IMR-90 (cell line): ENCODE measurements at regions of chr5 and their contacts with region 1.

Region 1: DNA sequence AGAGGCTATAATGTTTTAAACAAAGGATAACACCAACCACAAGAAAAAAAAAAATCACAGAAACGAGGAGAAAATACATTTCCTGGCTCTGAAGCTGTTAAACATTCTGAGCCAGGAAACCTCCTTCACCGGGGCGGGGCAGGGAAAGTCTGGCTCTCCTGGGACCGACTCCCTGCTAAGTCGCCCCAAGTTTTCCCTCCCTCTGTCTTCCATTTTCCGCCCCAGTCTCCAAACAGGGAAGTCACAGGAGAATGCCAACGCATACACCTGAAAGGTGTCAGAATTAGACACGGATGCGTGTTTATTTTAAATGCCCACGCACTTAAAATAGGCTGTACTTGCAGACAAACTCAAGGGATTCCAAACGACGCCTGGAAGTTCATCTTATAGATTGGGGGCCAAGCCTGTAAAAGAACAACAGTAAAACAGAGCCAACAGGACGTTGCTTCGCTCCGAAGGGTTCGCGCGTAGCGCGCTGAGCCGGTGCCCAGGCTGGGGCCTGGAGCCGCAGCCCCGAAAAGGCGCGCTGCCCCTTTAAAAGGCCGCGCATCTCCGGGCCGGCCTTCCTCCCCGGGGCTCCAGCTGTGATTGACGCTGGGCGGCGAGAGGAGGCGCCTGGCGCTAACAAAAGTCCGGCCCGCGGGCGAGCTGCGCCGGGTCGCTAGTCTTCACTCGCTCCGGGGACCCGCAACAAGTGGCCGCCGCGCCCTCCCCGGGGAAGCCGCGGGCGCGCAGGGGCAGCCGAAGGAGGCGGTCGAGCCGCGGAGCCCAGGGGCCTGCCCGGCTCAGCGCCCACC is at the start of gene FBXL7:
- DNase-seq: peak; percentile 75
- ATAC-seq: peak; percentile 85
- H3K4me3 ChIP-seq: peak within 1 kb of the TSS; percentile 97
- H3K27ac ChIP-seq: peak within 1 kb of the TSS; percentile 40
- H3K4me1 ChIP-seq: peaks cover 2% of the 10 kb centered on the region; the same call in 1 of the 2 replicates
- H3K27me3 ChIP-seq: peaks cover 7% of the 10 kb centered on the region
- CTCF ChIP-seq: peak; percentile 39
- POLR2A ChIP-seq: peak; percentile 73
- RAD21 ChIP-seq: peak; percentile 47
- total RNA-seq, gene FBXL7: 4.1 and 4.4 TPM in 2 replicates

Region 2: GRCh38 chr5:14706615-14707021 is 793.1 kb before region 1 on chr5:
- CTCF ChIA-PET with region 1: no interaction called
- POLR2A ChIA-PET with region 1: no interaction called
- dilution Hi-C with region 1: no loop called
- in situ Hi-C with region 1: loop called (anchors 25 kb)
- intact Hi-C with region 1: no loop called
- DNase-seq: peak; percentile 79
- ATAC-seq: peak; percentile 86
- H3K4me3 ChIP-seq: no peak overlapping the region
- H3K27ac ChIP-seq: peak overlapping the region; percentile 28
- H3K4me1 ChIP-seq: peaks cover 7% of the 10 kb centered on the region
- H3K27me3 ChIP-seq: no peaks in the 10 kb centered on the region
- CTCF ChIP-seq: no peak
- POLR2A ChIP-seq: no peak
- RAD21 ChIP-seq: no peak

Region 3: DNA sequence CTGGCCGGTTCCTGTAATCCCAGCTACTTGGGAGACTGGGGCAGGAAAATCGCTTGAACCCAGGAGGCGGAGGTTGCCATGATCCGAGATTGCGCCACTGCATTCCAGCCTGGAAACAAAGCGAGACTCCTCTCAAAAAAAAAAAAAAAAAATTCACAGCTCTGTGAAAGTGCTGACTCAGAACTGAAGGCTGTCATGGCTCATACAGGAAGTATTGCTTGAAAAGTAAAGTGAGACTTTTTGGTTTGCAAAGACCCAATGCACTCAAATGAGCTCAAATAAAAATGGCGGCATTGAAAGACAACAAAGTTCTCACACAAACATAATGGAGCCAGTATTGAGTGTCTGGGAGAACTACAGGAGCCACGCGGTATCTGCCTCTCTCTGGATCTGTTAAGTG is 202.4 kb after region 1 on chr5:
- CTCF ChIA-PET with region 1: no interaction called
- POLR2A ChIA-PET with region 1: no interaction called
- dilution Hi-C with region 1: no loop called
- in situ Hi-C with region 1: no loop called
- intact Hi-C with region 1: loop called (anchors 5 kb)
- DNase-seq: peak; percentile 54
- ATAC-seq: no peak; the same call in 1 of the 2 replicates
- H3K4me3 ChIP-seq: no peak overlapping the region
- H3K27ac ChIP-seq: no peak overlapping the region
- H3K4me1 ChIP-seq: peaks cover 4% of the 10 kb centered on the region; the same call in 1 of the 2 replicates
- H3K27me3 ChIP-seq: no peaks in the 10 kb centered on the region
- CTCF ChIP-seq: no peak
- POLR2A ChIP-seq: no peak
- RAD21 ChIP-seq: no peak

Region 4: DNA sequence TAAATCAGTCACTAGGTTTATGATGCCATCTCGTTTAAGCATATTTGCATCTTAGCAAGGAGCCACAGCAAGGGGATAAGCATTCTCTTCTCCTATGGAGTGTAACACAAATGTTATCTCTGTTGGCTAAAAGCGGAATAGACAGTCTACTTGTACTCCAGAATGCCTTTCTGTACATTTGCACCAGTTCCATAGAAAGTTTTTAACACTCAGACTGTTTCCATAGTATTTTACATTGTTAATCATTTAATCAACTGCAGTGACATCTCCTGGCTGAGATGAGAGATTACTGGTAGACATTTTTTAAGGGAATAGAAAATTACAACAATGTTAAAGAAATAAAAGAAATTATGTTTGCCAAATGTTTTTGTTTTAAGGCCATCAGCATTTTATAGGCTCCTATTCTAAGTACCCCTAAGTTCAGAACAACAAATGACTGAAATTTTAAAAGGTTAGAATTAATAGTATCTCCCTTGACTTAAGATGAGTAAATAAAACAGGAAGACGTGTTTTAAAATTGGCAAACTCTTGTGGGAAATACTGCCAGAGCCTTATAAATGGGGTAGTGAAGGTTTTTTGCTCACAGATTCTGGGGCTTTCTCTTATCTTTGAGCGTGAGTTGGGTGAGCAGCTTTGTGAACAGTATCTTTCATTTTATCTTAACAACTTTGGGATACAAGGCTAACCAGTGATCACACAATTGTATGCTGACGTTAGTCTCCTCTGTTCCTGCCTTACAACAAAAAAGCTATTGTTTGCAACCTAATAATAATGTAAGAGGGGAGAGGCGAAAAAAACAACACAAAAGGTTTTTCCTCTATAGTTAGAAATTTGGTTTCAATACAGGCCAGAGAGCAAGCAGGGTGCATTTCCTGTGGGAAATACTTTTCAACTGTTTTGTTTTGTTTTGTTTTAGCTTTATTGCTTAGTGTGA is 294.6 kb after region 1 on chr5:
- CTCF ChIA-PET with region 1: no interaction called
- POLR2A ChIA-PET with region 1: no interaction called
- dilution Hi-C with region 1: no loop called
- in situ Hi-C with region 1: no loop called
- intact Hi-C with region 1: loop called (anchors 2 kb)
- DNase-seq: peak; percentile 24
- ATAC-seq: no peak
- H3K4me3 ChIP-seq: no peak overlapping the region
- H3K27ac ChIP-seq: no peak overlapping the region
- H3K4me1 ChIP-seq: peaks cover 3% of the 10 kb centered on the region
- H3K27me3 ChIP-seq: no peaks in the 10 kb centered on the region
- CTCF ChIP-seq: peak; percentile 44
- POLR2A ChIP-seq: no peak
- RAD21 ChIP-seq: peak; percentile 45

Region 5: GRCh38 chr5:15821506-15821905 is 321.8 kb after region 1 on chr5:
- CTCF ChIA-PET with region 1: interaction called, 5 read pairs
- POLR2A ChIA-PET with region 1: no interaction called
- dilution Hi-C with region 1: no loop called
- in situ Hi-C with region 1: no loop called
- intact Hi-C with region 1: loop called (anchors 1 kb)
- DNase-seq: peak; percentile 65
- ATAC-seq: peak; percentile 86
- H3K4me3 ChIP-seq: no peak overlapping the region
- H3K27ac ChIP-seq: no peak overlapping the region
- H3K4me1 ChIP-seq: peaks cover 9% of the 10 kb centered on the region
- H3K27me3 ChIP-seq: no peaks in the 10 kb centered on the region
- CTCF ChIP-seq: no peak
- POLR2A ChIP-seq: no peak
- RAD21 ChIP-seq: no peak

Region 6: DNA sequence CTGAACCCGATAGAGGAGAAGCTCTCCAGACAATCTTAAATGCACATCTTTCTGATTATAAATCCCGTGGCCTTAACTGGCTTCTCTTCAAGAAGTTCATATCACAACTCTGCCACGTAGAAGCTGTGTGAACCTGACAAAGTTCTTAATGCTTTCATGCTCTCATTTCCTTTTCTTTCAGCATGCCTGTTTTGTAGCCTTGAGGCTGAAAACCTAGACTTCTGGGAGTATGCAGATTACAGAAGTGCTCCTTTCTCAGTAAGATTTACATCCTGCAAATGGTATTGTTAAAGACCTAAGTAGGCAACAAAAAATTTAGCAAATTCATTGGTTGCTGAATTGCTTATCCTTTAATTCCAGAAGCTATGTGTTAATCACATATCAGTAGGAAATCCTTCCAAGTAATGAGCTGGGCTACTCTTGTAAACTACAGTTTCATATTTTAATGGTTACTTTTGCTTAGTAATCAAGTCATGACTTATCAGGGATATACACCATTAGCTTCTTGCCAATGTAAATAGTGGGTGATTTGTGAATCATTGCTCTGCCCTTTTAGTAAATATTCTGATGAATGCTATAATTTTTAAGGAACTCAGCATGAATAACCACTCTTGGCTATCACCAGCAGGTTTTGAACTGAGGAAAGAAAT is 335.0 kb after region 1 on chr5:
- CTCF ChIA-PET with region 1: interaction called, 3 read pairs
- POLR2A ChIA-PET with region 1: no interaction called
- dilution Hi-C with region 1: no loop called
- in situ Hi-C with region 1: no loop called
- intact Hi-C with region 1: loop called (anchors 5 kb)
- DNase-seq: peak; percentile 91
- ATAC-seq: peak; percentile 85
- H3K4me3 ChIP-seq: no peak overlapping the region
- H3K27ac ChIP-seq: peak overlapping the region; percentile 37; the same call in 1 of the 2 replicates
- H3K4me1 ChIP-seq: peaks cover 7% of the 10 kb centered on the region
- H3K27me3 ChIP-seq: no peaks in the 10 kb centered on the region
- CTCF ChIP-seq: no peak
- POLR2A ChIP-seq: no peak
- RAD21 ChIP-seq: no peak

Region 7: DNA sequence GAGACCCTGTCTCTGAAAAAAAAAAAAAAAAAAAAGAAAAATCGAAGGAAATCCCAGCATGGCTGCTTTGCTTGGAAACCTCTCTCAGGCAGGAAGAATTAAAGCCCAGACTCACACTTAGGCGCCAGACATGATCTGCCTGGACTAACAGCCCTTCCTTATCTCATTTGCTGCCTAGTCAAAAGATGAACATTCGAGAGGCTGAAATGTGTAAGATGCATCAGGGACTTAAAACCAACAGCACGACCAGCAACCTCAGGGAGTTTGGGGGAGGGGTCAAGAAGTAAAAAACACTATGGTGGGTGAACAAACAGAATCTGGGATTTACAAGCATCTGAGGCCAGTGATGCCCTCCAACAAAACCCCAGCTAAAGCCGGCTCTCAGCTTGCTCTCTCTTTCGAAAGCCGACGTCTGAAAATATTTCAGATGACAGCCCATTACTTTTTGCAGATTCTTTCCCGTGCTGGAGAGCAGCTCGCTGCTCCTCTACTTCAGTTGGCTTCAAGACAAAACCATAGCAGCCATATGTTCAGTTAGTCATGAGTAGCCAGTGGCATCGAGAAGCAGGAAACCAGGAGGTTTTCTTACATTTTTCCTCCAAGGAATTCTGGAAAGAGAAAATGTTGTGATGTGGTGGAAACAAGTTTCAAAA is 430.0 kb after region 1 on chr5:
- CTCF ChIA-PET with region 1: no interaction called
- POLR2A ChIA-PET with region 1: no interaction called
- dilution Hi-C with region 1: no loop called
- in situ Hi-C with region 1: no loop called
- intact Hi-C with region 1: loop called (anchors 5 kb)
- DNase-seq: peak; percentile 90
- ATAC-seq: peak; percentile 87
- H3K4me3 ChIP-seq: peak overlapping the region; percentile 13
- H3K27ac ChIP-seq: peak overlapping the region; percentile 33; the same call in 1 of the 2 replicates
- H3K4me1 ChIP-seq: peaks cover 15% of the 10 kb centered on the region
- H3K27me3 ChIP-seq: no peaks in the 10 kb centered on the region
- CTCF ChIP-seq: no peak
- POLR2A ChIP-seq: no peak
- RAD21 ChIP-seq: no peak